ENCODE measurements at regions of chr16 and their contacts with region 1.

Region 1: GRCh38 chr16:4506450-4506849 is 30.3 kb downstream of the HMOX2 start:
- DNase-seq: no peak
- ATAC-seq: peak; percentile 84 to 94 (median 91)
- H3K4me3 ChIP-seq: no peak overlapping the region
- H3K27ac ChIP-seq: peak overlapping the region; percentile 14
- H3K4me1 ChIP-seq: no peaks in the 10 kb centered on the region
- H3K27me3 ChIP-seq: no peaks in the 10 kb centered on the region
- CTCF ChIP-seq: peak; percentile 85

Region 2: DNA sequence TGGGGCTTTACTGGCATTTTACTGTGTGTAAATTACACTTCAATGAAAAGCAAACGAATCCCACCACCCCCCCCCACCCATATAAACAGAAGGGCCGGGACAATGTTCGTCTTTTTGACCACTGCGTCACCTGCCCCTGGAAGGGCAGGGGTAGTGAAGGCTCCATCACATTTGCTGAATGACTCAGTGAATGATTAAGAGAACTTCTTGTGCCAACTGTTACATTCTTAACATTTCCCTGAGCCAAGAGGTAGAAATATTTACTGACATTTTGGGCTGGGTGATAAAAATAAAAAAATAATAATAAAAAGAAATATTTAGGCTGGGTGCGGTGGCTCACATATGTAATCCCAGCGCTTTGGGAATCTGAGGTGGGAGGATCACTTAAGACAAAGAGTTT is 73.8 kb after region 1 on chr16:
- intact Hi-C with region 1: loop called in 1 of 2 experiments (anchors 1 kb)
- DNase-seq: no peak
- ATAC-seq: no peak
- H3K4me3 ChIP-seq: no peak overlapping the region
- H3K27ac ChIP-seq: no peak overlapping the region
- H3K4me1 ChIP-seq: no peaks in the 10 kb centered on the region
- H3K27me3 ChIP-seq: peaks cover 0 to 2% (median 0%) of the 10 kb centered on the region in 3 donors
- CTCF ChIP-seq: no peak